ENCODE measurements at regions of chr17 and their contacts with region 1.

Region 1: GRCh38 chr17:61399131-61400057 is at the start of gene TBX2:
- DNase-seq: peak; percentile 92 to 97
- ATAC-seq: peak; percentile 65 to 88
- H3K4me3 ChIP-seq: peak within 1 kb of the TSS; percentile 84
- H3K27ac ChIP-seq: peak within 1 kb of the TSS; percentile 84 to 89
- H3K4me1 ChIP-seq: peaks cover 10% of the 10 kb centered on the region; the same call in 2 of the 3 replicates
- CTCF ChIP-seq: peak; percentile 43
- EP300 ChIP-seq: no peak
- POLR2A ChIP-seq: peak; percentile 43
- RAD21 ChIP-seq: peak in 1 of 2 experiments; percentile 28; a peak in 3 of 5 replicates
- polyA plus RNA-seq, gene TBX2: 0.69 and 0.71 TPM in 2 replicates

Region 2: DNA sequence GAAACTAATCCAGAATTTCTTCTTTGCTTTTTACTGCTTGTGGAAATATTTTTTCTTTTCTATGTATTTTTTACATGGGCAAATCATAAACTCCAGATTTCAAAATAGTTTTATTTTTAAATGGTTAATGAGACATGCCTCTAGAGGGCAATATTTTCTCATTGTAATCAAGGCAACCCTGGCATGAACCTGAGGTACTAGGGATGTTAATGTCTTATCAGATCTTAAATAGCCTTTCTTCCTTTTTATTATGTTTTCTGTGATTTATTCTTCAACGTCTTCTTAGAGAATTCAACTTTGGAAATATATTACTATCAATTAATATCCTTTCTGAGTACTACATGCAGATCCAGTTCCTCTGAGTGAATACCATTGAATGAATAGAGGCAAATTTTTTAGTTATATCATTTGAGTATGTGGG is 397.1 kb before region 1 on chr17:
- CTCF ChIA-PET with region 1: interaction called, 20 read pairs
- POLR2A ChIA-PET with region 1: no interaction called
- DNase-seq: peak; percentile 7 to 63
- ATAC-seq: peak in 1 of 2 experiments; percentile 64; a peak in 3 of 6 replicates
- H3K4me3 ChIP-seq: no peak overlapping the region
- H3K27ac ChIP-seq: no peak overlapping the region
- H3K4me1 ChIP-seq: peaks cover 7% of the 10 kb centered on the region; the same call in 2 of the 3 replicates
- CTCF ChIP-seq: peak; percentile 91
- EP300 ChIP-seq: no peak
- POLR2A ChIP-seq: no peak
- RAD21 ChIP-seq: peak; percentile 91 to 95

Region 3: GRCh38 chr17:61201232-61201640 is 198.2 kb before region 1 on chr17:
- CTCF ChIA-PET with region 1: no interaction called
- POLR2A ChIA-PET with region 1: interaction called, 10 read pairs
- DNase-seq: peak; percentile 25 to 91
- ATAC-seq: peak; percentile 91
- H3K4me3 ChIP-seq: peak overlapping the region; percentile 20; the same call in 2 of the 3 replicates
- H3K27ac ChIP-seq: peak overlapping the region; percentile 71 to 85
- H3K4me1 ChIP-seq: peaks cover 57% of the 10 kb centered on the region
- CTCF ChIP-seq: no peak
- EP300 ChIP-seq: peak; percentile 61 to 82; a peak in 3 of 5 replicates
- POLR2A ChIP-seq: no peak
- RAD21 ChIP-seq: peak; percentile 38 to 64

Measured in A549 (cell line).